Caco-2 (cell line): ENCODE measurements at regions of chr12 and their contacts with region 1.

Region 1: DNA sequence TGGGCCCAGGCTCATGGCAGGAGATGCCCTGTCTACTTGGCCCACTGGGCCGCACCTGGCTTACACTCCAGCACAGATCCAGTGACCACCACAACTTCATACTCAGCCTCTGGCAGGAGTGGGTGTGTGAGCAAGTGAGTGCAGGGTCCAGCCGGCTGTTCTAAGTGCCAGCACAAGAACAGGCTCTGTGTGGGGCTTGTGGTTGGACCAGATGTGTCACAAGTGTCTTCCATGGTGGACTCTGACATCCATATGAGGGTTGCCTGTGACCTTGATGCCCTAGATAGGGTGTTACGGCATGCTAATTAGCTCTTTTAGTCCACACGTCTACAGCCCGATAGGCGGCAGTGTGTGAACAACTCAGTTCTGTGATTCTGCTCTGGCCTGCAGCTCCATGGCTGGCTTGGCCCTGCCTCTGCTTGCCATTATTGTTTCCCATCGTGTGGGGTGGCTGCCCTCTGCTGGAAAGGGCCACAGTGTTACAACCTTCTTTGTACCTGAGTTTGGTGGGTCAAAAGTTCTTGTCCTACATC is 1089.1 kb downstream of the SLC6A15 start:
- DNase-seq: peak; percentile 68 to 76
- H3K4me3 ChIP-seq: no peak overlapping the region
- H3K4me3 Mint-ChIP-seq: no peak overlapping the region
- H3K27ac Mint-ChIP-seq: no peak overlapping the region
- H3K4me1 ChIP-seq: no peaks in the 10 kb centered on the region
- H3K4me1 Mint-ChIP-seq: no peaks in the 10 kb centered on the region
- H3K27me3 ChIP-seq: no peaks in the 10 kb centered on the region
- H3K27me3 Mint-ChIP-seq: no peaks in the 10 kb centered on the region
- CTCF ChIP-seq: peak; percentile 44 to 50

Region 2: DNA sequence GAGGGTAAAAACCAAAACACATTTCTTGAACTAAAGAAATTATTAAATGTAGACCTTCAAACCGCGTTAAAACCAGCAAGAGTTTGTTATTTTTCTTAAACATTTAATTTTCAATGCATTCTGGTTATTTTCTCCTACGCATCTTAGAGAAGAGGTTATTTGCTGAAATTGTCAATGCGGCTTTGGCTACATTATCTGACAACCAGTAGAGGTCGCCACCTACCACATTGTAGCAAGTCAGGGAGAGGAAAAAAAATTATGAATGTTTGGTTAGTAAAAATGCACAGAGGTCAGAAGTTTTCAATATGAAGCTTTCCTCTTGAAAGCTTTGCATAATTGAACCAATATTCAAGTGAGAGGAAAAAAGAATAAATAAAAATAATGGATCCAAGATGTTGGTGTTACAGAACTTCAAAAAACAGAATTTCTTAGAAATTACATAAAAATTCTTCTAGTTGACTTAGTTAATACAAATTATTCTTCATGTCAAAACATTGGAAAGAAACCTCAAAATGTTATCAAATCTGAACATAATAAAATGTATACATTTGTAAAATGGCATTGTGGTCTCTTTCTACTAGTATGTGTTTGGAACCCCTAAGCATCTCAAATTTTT is 1296.2 kb before region 1 on chr12:
- CTCF ChIA-PET with region 1: no interaction called
- POLR2A ChIA-PET with region 1: no interaction called
- intact Hi-C with region 1: loop called (anchors 10 kb)
- DNase-seq: peak in 1 of 2 experiments; percentile 58
- H3K4me3 ChIP-seq: no peak overlapping the region
- H3K4me3 Mint-ChIP-seq: no peak overlapping the region
- H3K27ac Mint-ChIP-seq: no peak overlapping the region
- H3K4me1 ChIP-seq: peaks cover 9% of the 10 kb centered on the region
- H3K4me1 Mint-ChIP-seq: peaks cover 9% of the 10 kb centered on the region
- H3K27me3 ChIP-seq: no peaks in the 10 kb centered on the region
- H3K27me3 Mint-ChIP-seq: peaks cover 2% of the 10 kb centered on the region
- CTCF ChIP-seq: peak; percentile 81 to 84

Region 3: GRCh38 chr12:82896979-82897378 is 926.5 kb before region 1 on chr12:
- CTCF ChIA-PET with region 1: no interaction called
- POLR2A ChIA-PET with region 1: no interaction called
- intact Hi-C with region 1: loop called (anchors 5 kb)
- DNase-seq: peak in 1 of 2 experiments; percentile 12
- H3K4me3 ChIP-seq: no peak overlapping the region
- H3K4me3 Mint-ChIP-seq: no peak overlapping the region
- H3K27ac Mint-ChIP-seq: no peak overlapping the region
- H3K4me1 ChIP-seq: peaks cover 14% of the 10 kb centered on the region; the same call in 1 of the 2 replicates
- H3K4me1 Mint-ChIP-seq: no peaks in the 10 kb centered on the region
- H3K27me3 ChIP-seq: no peaks in the 10 kb centered on the region
- H3K27me3 Mint-ChIP-seq: peaks cover 2% of the 10 kb centered on the region
- CTCF ChIP-seq: no peak

Region 4: DNA sequence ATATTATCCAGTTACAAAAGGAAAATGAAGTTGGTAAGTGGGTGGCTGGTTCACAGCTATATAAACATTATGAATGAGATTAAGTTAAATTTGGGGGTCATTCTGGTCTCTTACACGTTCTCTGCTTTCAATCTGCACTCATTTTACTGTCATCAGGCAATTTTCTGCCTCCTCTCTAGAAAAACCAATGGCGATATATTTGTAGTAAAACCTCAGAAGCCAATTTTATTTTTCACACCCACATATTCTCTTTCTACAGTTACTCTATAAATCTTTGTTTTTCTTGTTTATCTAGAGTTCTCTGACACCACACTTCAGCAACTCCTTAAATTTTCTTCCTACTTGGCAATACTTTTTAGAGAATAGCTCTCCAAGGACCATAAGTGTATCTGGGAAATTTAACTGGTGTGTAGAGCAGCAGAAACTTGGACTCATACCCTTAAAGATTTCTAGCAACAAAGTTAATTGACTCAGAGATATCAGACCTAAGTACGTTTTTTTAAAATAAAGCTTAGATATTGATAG is 209.8 kb before region 1 on chr12:
- CTCF ChIA-PET with region 1: no interaction called
- POLR2A ChIA-PET with region 1: no interaction called
- intact Hi-C with region 1: no loop called
- DNase-seq: no peak
- H3K4me3 ChIP-seq: no peak overlapping the region
- H3K4me3 Mint-ChIP-seq: no peak overlapping the region
- H3K27ac Mint-ChIP-seq: no peak overlapping the region
- H3K4me1 ChIP-seq: no peaks in the 10 kb centered on the region
- H3K4me1 Mint-ChIP-seq: no peaks in the 10 kb centered on the region
- H3K27me3 ChIP-seq: no peaks in the 10 kb centered on the region
- H3K27me3 Mint-ChIP-seq: no peaks in the 10 kb centered on the region
- CTCF ChIP-seq: no peak

Region 5: GRCh38 chr12:83801972-83802371 is 21.5 kb before region 1 on chr12:
- CTCF ChIA-PET with region 1: no interaction called
- POLR2A ChIA-PET with region 1: no interaction called
- intact Hi-C with region 1: no loop called
- DNase-seq: no peak
- H3K4me3 ChIP-seq: no peak overlapping the region
- H3K4me3 Mint-ChIP-seq: no peak overlapping the region
- H3K27ac Mint-ChIP-seq: no peak overlapping the region
- H3K4me1 ChIP-seq: no peaks in the 10 kb centered on the region
- H3K4me1 Mint-ChIP-seq: peaks cover 11% of the 10 kb centered on the region
- H3K27me3 ChIP-seq: no peaks in the 10 kb centered on the region
- H3K27me3 Mint-ChIP-seq: no peaks in the 10 kb centered on the region
- CTCF ChIP-seq: no peak

Region 6: GRCh38 chr12:84502907-84503787 is 679.6 kb after region 1 on chr12:
- CTCF ChIA-PET with region 1: no interaction called
- POLR2A ChIA-PET with region 1: no interaction called
- intact Hi-C with region 1: loop called (anchors 5 kb)
- DNase-seq: peak; percentile 42 to 52
- H3K4me3 ChIP-seq: no peak overlapping the region
- H3K4me3 Mint-ChIP-seq: no peak overlapping the region
- H3K27ac Mint-ChIP-seq: no peak overlapping the region
- H3K4me1 ChIP-seq: no peaks in the 10 kb centered on the region
- H3K4me1 Mint-ChIP-seq: no peaks in the 10 kb centered on the region
- H3K27me3 ChIP-seq: no peaks in the 10 kb centered on the region
- H3K27me3 Mint-ChIP-seq: no peaks in the 10 kb centered on the region
- CTCF ChIP-seq: peak; percentile 66 to 67